Right ventricle myocardium inferior (tissue), 1 donor: ENCODE measurements at regions of chr6 and their contacts with region 1.

Region 1: GRCh38 chr6:35016502-35017321 is 124.4 kb downstream of the TCP11 start:
- DNase-seq: no peak
- ATAC-seq: peak; percentile 62

Region 2: DNA sequence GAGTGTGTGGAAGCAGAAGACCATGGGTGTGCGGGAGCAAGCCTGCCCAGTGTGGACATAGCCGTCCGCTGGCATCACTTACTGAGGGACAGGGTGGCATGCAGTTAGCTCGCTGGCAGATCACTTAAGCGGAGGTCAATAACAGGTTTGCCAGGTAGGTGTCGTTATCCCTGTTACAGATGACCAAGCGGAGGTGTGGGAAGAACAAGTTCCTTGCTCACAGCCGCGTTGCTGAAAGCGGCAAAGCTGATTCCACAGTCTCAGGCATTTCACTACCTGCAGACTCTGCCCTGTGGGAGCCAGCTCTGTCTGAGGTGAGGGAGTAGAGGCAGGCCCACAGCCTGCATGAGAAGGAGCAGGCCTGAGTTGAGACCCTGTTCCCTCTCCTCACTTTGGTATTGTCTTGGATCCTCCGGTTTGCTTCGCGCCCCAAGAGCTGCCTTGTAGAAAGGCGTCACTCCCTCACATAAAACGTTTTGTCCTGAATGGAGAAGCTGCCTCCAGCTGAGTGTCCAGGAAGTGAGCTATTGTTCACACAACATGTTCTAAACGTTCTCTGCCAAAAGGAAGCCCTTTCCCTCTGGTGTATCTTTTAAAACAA is 27.5 kb after region 1 on chr6:
- intact Hi-C with region 1: loop called (anchors 2 kb)
- DNase-seq: no peak
- ATAC-seq: peak; percentile 27

Region 3: GRCh38 chr6:35057449-35058357 is 41.0 kb after region 1 on chr6:
- intact Hi-C with region 1: loop called (anchors 5 kb)
- DNase-seq: no peak
- ATAC-seq: peak; percentile 47

Region 4: DNA sequence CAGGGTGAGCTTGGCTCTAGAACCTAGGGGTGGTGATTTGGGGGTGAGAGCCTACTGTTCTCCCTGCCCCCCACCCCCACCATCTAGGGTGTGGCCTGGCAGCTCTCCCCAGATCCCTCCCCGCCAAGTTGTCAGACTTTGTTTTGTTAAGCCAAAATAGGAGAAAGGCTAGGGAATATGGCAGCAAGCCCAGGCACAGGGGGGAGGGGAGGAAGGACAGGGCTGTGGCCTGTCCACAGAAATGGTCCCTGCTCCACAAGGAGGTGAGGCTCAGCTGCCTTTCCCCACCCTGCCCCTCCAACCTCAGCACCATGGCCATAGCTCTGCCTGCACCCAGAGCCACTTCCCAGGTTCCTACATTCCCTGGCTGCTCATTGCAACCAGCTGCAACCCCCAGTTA is 214.2 kb after region 1 on chr6:
- intact Hi-C with region 1: no loop called
- DNase-seq: peak; percentile 78
- ATAC-seq: peak; percentile 46